Caco-2 (cell line): ENCODE measurements at regions of chr3 and their contacts with region 1.

Region 1: GRCh38 chr3:174862143-174862542 is 3.0 kb downstream of the NAALADL2 start:
- DNase-seq: peak; percentile 58 to 60
- H3K4me3 ChIP-seq: no peak overlapping the region
- H3K4me3 Mint-ChIP-seq: no peak overlapping the region
- H3K27ac Mint-ChIP-seq: no peak overlapping the region
- H3K4me1 ChIP-seq: peaks cover 41% of the 10 kb centered on the region
- H3K4me1 Mint-ChIP-seq: peaks cover 14% of the 10 kb centered on the region
- H3K27me3 ChIP-seq: no peaks in the 10 kb centered on the region
- H3K27me3 Mint-ChIP-seq: no peaks in the 10 kb centered on the region
- CTCF ChIP-seq: peak; percentile 17 to 47

Region 2: GRCh38 chr3:174697310-174697709 is 164.8 kb before region 1 on chr3:
- CTCF ChIA-PET with region 1: no interaction called
- POLR2A ChIA-PET with region 1: no interaction called
- intact Hi-C with region 1: loop called (anchors 2 kb)
- DNase-seq: no peak
- H3K4me3 ChIP-seq: no peak overlapping the region
- H3K4me3 Mint-ChIP-seq: no peak overlapping the region
- H3K27ac Mint-ChIP-seq: no peak overlapping the region
- H3K4me1 ChIP-seq: no peaks in the 10 kb centered on the region
- H3K4me1 Mint-ChIP-seq: no peaks in the 10 kb centered on the region
- H3K27me3 ChIP-seq: no peaks in the 10 kb centered on the region
- H3K27me3 Mint-ChIP-seq: no peaks in the 10 kb centered on the region
- CTCF ChIP-seq: no peak

Region 3: DNA sequence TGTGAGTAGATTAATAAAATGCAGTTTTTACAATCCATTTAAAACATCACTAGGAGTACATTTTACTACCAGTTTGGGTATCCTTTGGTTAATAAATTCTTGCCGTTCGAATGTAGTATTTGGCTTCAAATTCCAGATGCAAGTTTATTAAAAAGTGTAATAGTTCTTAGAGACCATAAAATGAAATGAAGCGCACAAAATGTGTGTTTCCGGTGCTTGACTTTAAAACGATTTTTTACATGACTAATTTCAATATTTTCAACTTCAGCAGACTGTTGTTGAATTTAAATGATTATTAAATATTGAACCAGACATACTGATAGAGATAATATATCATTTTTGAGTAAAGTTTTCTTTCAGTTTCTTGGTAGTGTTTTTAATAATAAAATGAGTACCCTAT is 141.4 kb before region 1 on chr3:
- CTCF ChIA-PET with region 1: no interaction called
- POLR2A ChIA-PET with region 1: no interaction called
- intact Hi-C with region 1: no loop called
- DNase-seq: no peak
- H3K4me3 ChIP-seq: no peak overlapping the region
- H3K4me3 Mint-ChIP-seq: no peak overlapping the region
- H3K27ac Mint-ChIP-seq: no peak overlapping the region
- H3K4me1 ChIP-seq: no peaks in the 10 kb centered on the region
- H3K4me1 Mint-ChIP-seq: no peaks in the 10 kb centered on the region
- H3K27me3 ChIP-seq: no peaks in the 10 kb centered on the region
- H3K27me3 Mint-ChIP-seq: no peaks in the 10 kb centered on the region
- CTCF ChIP-seq: no peak

Region 4: DNA sequence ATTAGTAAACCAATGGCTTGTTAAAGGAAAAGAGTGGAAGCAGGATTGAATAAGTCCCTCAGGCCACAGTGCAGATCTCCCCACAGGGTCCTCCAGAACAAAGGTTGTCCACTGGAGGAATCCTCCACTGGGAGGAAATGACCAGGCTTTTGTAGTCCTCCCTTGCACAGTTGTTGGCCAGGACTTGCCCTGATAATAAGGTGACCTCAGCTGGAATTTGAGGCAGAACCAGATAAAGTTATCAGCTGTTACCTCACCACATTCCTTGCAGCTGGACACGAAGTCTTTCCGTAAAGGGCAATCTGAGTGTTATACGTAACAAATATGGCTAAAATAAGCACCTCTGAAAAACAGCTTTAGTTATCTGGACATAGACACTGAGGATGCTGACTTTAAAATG is 86.6 kb before region 1 on chr3:
- CTCF ChIA-PET with region 1: no interaction called
- POLR2A ChIA-PET with region 1: no interaction called
- intact Hi-C with region 1: loop called (anchors 5 kb)
- DNase-seq: peak; percentile 55 to 67
- H3K4me3 ChIP-seq: no peak overlapping the region
- H3K4me3 Mint-ChIP-seq: no peak overlapping the region
- H3K27ac Mint-ChIP-seq: peak overlapping the region; percentile 6
- H3K4me1 ChIP-seq: peaks cover 14% of the 10 kb centered on the region
- H3K4me1 Mint-ChIP-seq: no peaks in the 10 kb centered on the region
- H3K27me3 ChIP-seq: no peaks in the 10 kb centered on the region
- H3K27me3 Mint-ChIP-seq: no peaks in the 10 kb centered on the region
- CTCF ChIP-seq: no peak

Region 5: GRCh38 chr3:174891524-174892203 is 29.5 kb after region 1 on chr3:
- CTCF ChIA-PET with region 1: no interaction called
- POLR2A ChIA-PET with region 1: no interaction called
- intact Hi-C with region 1: loop called (anchors 2 kb)
- DNase-seq: peak in 1 of 2 experiments; percentile 21
- H3K4me3 ChIP-seq: no peak overlapping the region
- H3K4me3 Mint-ChIP-seq: no peak overlapping the region
- H3K27ac Mint-ChIP-seq: no peak overlapping the region
- H3K4me1 ChIP-seq: no peaks in the 10 kb centered on the region
- H3K4me1 Mint-ChIP-seq: no peaks in the 10 kb centered on the region
- H3K27me3 ChIP-seq: no peaks in the 10 kb centered on the region
- H3K27me3 Mint-ChIP-seq: no peaks in the 10 kb centered on the region
- CTCF ChIP-seq: no peak

Region 6: GRCh38 chr3:174955513-174956001 is 93.4 kb after region 1 on chr3:
- CTCF ChIA-PET with region 1: no interaction called
- POLR2A ChIA-PET with region 1: no interaction called
- intact Hi-C with region 1: loop called (anchors 1 kb)
- DNase-seq: peak; percentile 65 to 73
- H3K4me3 ChIP-seq: no peak overlapping the region
- H3K4me3 Mint-ChIP-seq: no peak overlapping the region
- H3K27ac Mint-ChIP-seq: peak overlapping the region; percentile 70
- H3K4me1 ChIP-seq: peaks cover 19% of the 10 kb centered on the region
- H3K4me1 Mint-ChIP-seq: peaks cover 30% of the 10 kb centered on the region
- H3K27me3 ChIP-seq: no peaks in the 10 kb centered on the region
- H3K27me3 Mint-ChIP-seq: no peaks in the 10 kb centered on the region
- CTCF ChIP-seq: no peak

Region 7: GRCh38 chr3:175121225-175121624 is 259.1 kb after region 1 on chr3:
- CTCF ChIA-PET with region 1: no interaction called
- POLR2A ChIA-PET with region 1: no interaction called
- intact Hi-C with region 1: loop called (anchors 2 kb)
- DNase-seq: peak; percentile 31 to 47
- H3K4me3 ChIP-seq: no peak overlapping the region
- H3K4me3 Mint-ChIP-seq: no peak overlapping the region
- H3K27ac Mint-ChIP-seq: no peak overlapping the region
- H3K4me1 ChIP-seq: no peaks in the 10 kb centered on the region
- H3K4me1 Mint-ChIP-seq: no peaks in the 10 kb centered on the region
- H3K27me3 ChIP-seq: no peaks in the 10 kb centered on the region
- H3K27me3 Mint-ChIP-seq: no peaks in the 10 kb centered on the region
- CTCF ChIP-seq: peak; percentile 27 to 66